Panc1 (cell line): ENCODE measurements at regions of chr15 and their contacts with region 1.

Region 1: GRCh38 chr15:37134699-37135131 is 34.4 kb upstream of the MEIS2 start:
- DNase-seq: no peak
- ATAC-seq: peak; percentile 85
- H3K4me3 ChIP-seq: no peak overlapping the region
- H3K27ac ChIP-seq: no peak overlapping the region
- H3K4me1 ChIP-seq: no peaks in the 10 kb centered on the region; the same call in 1 of the 2 replicates
- H3K27me3 ChIP-seq: peaks cover 2% of the 10 kb centered on the region; the same call in 1 of the 2 replicates
- CTCF ChIP-seq: peak; percentile 75; the same call in 1 of the 2 replicates

Region 2: DNA sequence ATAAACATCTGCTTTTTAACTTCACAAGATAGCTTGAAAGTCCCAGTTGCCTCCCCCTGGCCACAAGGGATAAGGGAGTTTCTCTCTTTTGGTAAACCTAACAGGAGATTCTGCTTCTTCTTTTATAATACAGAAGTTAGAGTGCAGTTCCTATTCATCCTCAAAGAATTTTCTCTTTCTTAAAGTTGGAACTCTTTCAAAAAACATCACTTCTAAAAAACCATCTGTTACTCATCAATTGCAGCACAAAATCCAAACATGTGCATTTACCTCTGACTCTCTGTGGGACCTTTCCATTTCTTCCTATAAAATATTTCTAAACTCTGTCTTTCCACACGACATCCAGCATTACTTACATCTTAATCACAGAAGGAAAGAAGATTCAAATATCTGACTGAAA is 1593.8 kb before region 1 on chr15:
- CTCF ChIA-PET with region 1: interaction called, 10 read pairs
- POLR2A ChIA-PET with region 1: no interaction called
- in situ Hi-C with region 1: no loop called
- intact Hi-C with region 1: no loop called
- DNase-seq: no peak
- ATAC-seq: no peak
- H3K4me3 ChIP-seq: no peak overlapping the region
- H3K27ac ChIP-seq: no peak overlapping the region
- H3K4me1 ChIP-seq: peaks cover 4% of the 10 kb centered on the region; the same call in 1 of the 2 replicates
- H3K27me3 ChIP-seq: no peaks in the 10 kb centered on the region
- CTCF ChIP-seq: no peak

Region 3: GRCh38 chr15:36501063-36501678 is 633.5 kb before region 1 on chr15:
- CTCF ChIA-PET with region 1: interaction called, 3 read pairs
- POLR2A ChIA-PET with region 1: no interaction called
- in situ Hi-C with region 1: no loop called
- intact Hi-C with region 1: loop called (anchors 2 kb)
- DNase-seq: peak; percentile 59
- ATAC-seq: peak; percentile 99
- H3K4me3 ChIP-seq: no peak overlapping the region
- H3K27ac ChIP-seq: no peak overlapping the region
- H3K4me1 ChIP-seq: peaks cover 11% of the 10 kb centered on the region
- H3K27me3 ChIP-seq: no peaks in the 10 kb centered on the region
- CTCF ChIP-seq: peak; percentile 87; the same call in 1 of the 2 replicates

Region 4: DNA sequence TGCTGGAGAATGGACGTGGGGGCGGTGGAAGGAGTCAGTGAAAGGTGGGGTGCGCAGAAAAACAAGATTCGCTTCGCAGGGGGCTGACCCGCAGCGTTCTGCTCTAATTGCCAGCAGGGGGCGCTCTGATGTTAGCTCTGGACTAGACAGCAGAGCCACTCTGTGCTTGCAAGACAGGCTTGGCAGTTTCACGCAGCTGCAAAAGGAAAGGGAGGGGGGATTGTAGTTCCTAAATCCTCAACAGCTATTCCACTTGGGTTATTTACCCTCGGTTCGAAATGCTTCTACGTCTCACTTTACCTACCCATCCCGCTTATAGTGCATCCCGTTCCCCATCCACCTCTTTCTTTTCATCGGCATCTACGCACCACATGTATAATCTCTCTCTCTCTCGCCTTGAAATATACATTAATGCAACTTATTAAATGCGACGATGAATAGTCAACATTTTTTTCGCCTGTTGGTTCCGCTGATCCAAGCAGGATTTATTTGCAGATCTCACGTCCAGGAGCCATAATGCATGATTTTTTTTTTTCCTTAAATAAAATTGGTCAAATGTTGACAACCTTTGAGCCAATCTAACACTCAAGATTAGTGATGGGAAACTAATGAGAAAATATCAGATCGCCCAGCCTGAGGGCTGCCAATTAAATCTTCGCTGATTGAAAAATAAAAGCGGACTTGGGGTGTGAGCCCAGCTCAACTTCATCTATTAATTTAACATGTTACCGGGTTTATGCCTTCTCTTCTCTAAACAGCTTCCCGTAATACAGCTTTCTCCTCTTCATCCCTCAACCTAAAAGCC is 250.8 kb before region 1 on chr15:
- CTCF ChIA-PET with region 1: interaction called, 4 read pairs
- POLR2A ChIA-PET with region 1: no interaction called
- in situ Hi-C with region 1: no loop called
- intact Hi-C with region 1: loop called (anchors 5 kb)
- DNase-seq: peak; percentile 30
- ATAC-seq: peak; percentile 91
- H3K4me3 ChIP-seq: no peak overlapping the region
- H3K27ac ChIP-seq: no peak overlapping the region
- H3K4me1 ChIP-seq: peaks cover 5% of the 10 kb centered on the region; the same call in 1 of the 2 replicates
- H3K27me3 ChIP-seq: peaks cover 24% of the 10 kb centered on the region
- CTCF ChIP-seq: peak; percentile 91

Region 5: DNA sequence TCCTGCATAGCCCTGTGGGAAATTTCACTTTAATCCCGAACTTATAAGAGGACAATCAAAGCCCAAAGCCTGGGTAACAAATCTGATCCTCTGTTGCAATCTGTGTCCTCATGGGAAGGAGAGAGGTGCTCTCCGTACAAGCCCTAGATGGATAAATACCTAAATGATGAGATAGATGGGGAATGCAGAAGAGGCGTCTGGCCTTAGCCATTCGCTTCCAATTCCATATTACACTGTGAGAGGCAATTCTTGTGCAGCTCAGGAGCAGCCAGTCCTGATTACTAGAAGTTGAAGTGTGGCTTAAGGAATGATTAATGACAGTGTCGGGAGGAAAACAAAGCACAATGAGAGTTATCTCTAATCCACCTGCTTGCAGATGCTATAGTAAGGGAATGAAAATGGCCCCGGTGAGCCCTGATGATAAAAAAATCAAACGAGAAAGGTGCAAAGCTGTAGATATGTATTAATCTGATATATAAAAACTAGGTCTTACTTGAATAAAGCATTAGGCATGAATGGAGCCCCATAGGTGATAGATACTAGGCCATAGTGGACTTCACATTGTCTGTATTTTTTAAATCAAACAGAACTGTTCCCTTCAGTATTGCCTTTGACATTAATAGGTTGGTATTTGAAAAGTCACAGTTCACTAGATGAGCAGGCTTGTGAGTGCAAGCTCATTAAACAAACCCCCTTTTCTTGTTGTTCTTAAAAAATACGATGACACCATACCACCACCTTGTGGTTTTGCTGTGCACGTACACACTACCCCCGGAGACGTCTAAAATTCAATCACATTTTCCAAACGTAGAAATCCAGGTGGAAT is 745.5 kb after region 1 on chr15:
- CTCF ChIA-PET with region 1: no interaction called
- POLR2A ChIA-PET with region 1: no interaction called
- in situ Hi-C with region 1: no loop called
- intact Hi-C with region 1: loop called (anchors 10 kb)
- DNase-seq: no peak
- ATAC-seq: no peak; the same call in 1 of the 2 replicates
- H3K4me3 ChIP-seq: no peak overlapping the region
- H3K27ac ChIP-seq: no peak overlapping the region
- H3K4me1 ChIP-seq: no peaks in the 10 kb centered on the region
- H3K27me3 ChIP-seq: peaks cover 5% of the 10 kb centered on the region; the same call in 1 of the 2 replicates
- CTCF ChIP-seq: peak; percentile 73; the same call in 1 of the 2 replicates